CD4-positive, alpha-beta T cell (primary cell): ENCODE measurements at regions of chr11 and their contacts with region 1.

Region 1: GRCh38 chr11:66677599-66678375 is at the start of gene RBM4B:
- DNase-seq: peak; percentile 91 to 99 (median 94)
- ATAC-seq: peak; percentile 78
- H3K4me3 ChIP-seq: peak within 1 kb of the TSS; percentile 92
- H3K4me3 Mint-ChIP-seq: peak within 1 kb of the TSS; percentile 98
- H3K27ac ChIP-seq: peak within 1 kb of the TSS; percentile 98 to 99
- H3K27ac Mint-ChIP-seq: peak within 1 kb of the TSS; percentile 98
- H3K4me1 ChIP-seq: peaks cover 32% of the 10 kb centered on the region
- H3K4me1 Mint-ChIP-seq: peaks cover 49% of the 10 kb centered on the region
- H3K27me3 ChIP-seq: no peaks in the 10 kb centered on the region
- H3K27me3 Mint-ChIP-seq: no peaks in the 10 kb centered on the region
- CTCF ChIP-seq: no peak
- total RNA-seq, gene RBM4B: 3.8 to 5.1 TPM

Region 2: GRCh38 chr11:66438504-66439466 is 239.0 kb before region 1 on chr11 and contains the start of gene MRPL11:
- CTCF ChIA-PET with region 1: interaction called, 18 read pairs
- POLR2A ChIA-PET with region 1: interaction called, 30 read pairs
- intact Hi-C with region 1: no loop called
- DNase-seq: peak; percentile 78 to 95 (median 86)
- ATAC-seq: peak; percentile 99
- H3K4me3 ChIP-seq: peak within 1 kb of the TSS; percentile 70
- H3K4me3 Mint-ChIP-seq: peak within 1 kb of the TSS; percentile 94
- H3K27ac ChIP-seq: peak within 1 kb of the TSS; percentile 67 to 89
- H3K27ac Mint-ChIP-seq: peak within 1 kb of the TSS; percentile 87
- H3K4me1 ChIP-seq: peaks cover 11% of the 10 kb centered on the region
- H3K4me1 Mint-ChIP-seq: peaks cover 13% of the 10 kb centered on the region
- H3K27me3 ChIP-seq: no peaks in the 10 kb centered on the region
- H3K27me3 Mint-ChIP-seq: peaks cover 3% of the 10 kb centered on the region
- CTCF ChIP-seq: peak; percentile 69
- total RNA-seq, gene MRPL11: 17.7 to 21.0 TPM

Region 3: DNA sequence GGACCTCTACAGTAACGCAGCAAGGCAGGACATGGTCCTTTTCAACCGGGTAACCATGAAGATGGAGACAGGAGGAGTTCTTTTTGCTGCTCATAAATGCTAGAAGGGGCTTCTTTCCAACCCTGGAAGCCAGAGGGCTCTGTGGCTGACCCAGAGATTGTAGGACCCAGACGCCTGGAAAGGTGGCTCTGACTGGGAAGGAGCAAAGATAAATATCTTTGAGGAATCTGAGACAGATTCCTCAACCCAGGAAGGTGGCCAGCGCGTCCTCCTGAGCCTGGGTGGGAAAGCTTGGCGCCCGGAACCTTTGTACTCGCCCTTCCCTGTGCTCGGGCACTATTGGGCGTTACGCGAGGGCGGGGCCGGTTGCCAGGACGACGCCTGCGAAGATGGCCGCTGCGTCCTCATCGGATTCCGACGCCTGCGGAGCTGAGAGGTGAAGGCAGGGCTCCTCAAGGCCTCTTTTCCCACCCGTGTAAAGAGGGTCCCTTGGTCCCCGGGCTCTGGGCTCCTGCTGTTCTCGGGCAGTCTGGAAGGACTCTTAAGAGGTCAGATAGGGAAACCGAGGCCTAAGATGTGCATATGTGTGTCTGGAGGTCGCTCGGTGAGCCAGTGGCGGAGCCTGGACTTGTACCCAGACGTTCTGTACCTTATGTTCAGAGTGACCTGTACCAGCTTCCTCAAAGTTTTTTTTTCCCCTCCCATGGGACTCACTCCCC is 167.4 kb before region 1 on chr11 and contains the start of gene BBS1:
- CTCF ChIA-PET with region 1: interaction called, 3 read pairs
- POLR2A ChIA-PET with region 1: interaction called, 12 read pairs
- intact Hi-C with region 1: loop called in 1 of 2 experiments (anchors 1 kb)
- DNase-seq: peak; percentile 73 to 90 (median 80)
- ATAC-seq: peak; percentile 99
- H3K4me3 ChIP-seq: peak within 1 kb of the TSS; percentile 77
- H3K4me3 Mint-ChIP-seq: peak within 1 kb of the TSS; percentile 90
- H3K27ac ChIP-seq: no peak within 1 kb of the TSS
- H3K27ac Mint-ChIP-seq: peak within 1 kb of the TSS; percentile 61
- H3K4me1 ChIP-seq: peaks cover 14% of the 10 kb centered on the region
- H3K4me1 Mint-ChIP-seq: peaks cover 16% of the 10 kb centered on the region
- H3K27me3 ChIP-seq: no peaks in the 10 kb centered on the region
- H3K27me3 Mint-ChIP-seq: no peaks in the 10 kb centered on the region
- CTCF ChIP-seq: no peak
- total RNA-seq, gene BBS1: 11.7 to 11.9 TPM

Region 4: DNA sequence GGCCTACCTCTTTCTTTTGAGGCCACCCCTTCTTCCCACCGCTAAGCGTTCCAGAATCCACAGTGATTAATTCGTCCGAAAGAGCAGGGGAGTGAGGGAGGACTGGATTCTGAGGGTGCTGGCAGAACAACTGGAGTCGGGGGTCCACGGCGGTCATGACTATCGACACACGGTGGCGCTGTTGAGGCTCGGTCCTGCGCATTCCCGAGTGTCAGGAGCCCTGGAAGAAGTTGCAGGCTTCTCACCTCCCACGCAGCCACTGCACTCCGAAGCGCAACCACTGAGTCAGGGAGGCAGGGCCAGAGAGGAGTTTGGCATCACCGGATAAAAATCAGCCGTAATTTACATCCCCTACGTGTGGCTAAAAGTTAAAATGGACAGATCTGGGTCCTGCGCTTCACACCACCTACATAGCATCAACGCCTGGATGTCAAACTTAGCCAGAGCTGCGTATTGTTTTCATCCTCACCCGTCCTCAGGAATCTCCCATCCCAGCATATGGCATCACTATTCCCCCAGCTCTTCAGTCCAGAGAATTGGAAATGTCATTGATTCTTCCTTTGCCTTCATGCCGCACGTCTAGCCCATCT is 98.7 kb before region 1 on chr11:
- CTCF ChIA-PET with region 1: interaction called, 75 read pairs
- POLR2A ChIA-PET with region 1: interaction called, 25 read pairs
- intact Hi-C with region 1: loop called (anchors 1 kb)
- DNase-seq: peak; percentile 60 to 89 (median 72)
- ATAC-seq: peak; percentile 82
- H3K4me3 ChIP-seq: no peak overlapping the region
- H3K4me3 Mint-ChIP-seq: no peak overlapping the region
- H3K27ac ChIP-seq: no peak overlapping the region
- H3K27ac Mint-ChIP-seq: no peak overlapping the region
- H3K4me1 ChIP-seq: peaks cover 8% of the 10 kb centered on the region
- H3K4me1 Mint-ChIP-seq: peaks cover 8% of the 10 kb centered on the region
- H3K27me3 ChIP-seq: no peaks in the 10 kb centered on the region
- H3K27me3 Mint-ChIP-seq: peaks cover 6% of the 10 kb centered on the region
- CTCF ChIP-seq: peak; percentile 85

Region 5: GRCh38 chr11:66638177-66639065 is 39.4 kb before region 1 on chr11 and contains the start of gene RBM4:
- CTCF ChIA-PET with region 1: interaction called, 32 read pairs
- POLR2A ChIA-PET with region 1: interaction called, 110 read pairs
- intact Hi-C with region 1: loop called (anchors 1 kb)
- DNase-seq: peak; percentile 90 to 99 (median 94)
- ATAC-seq: peak; percentile 89
- H3K4me3 ChIP-seq: peak within 1 kb of the TSS; percentile 82
- H3K4me3 Mint-ChIP-seq: peak within 1 kb of the TSS; percentile 97
- H3K27ac ChIP-seq: peak within 1 kb of the TSS; percentile 94
- H3K27ac Mint-ChIP-seq: peak within 1 kb of the TSS; percentile 89
- H3K4me1 ChIP-seq: peaks cover 62% of the 10 kb centered on the region
- H3K4me1 Mint-ChIP-seq: peaks cover 73% of the 10 kb centered on the region
- H3K27me3 ChIP-seq: no peaks in the 10 kb centered on the region
- H3K27me3 Mint-ChIP-seq: no peaks in the 10 kb centered on the region
- CTCF ChIP-seq: no peak
- total RNA-seq, gene RBM4: 194 to 197 TPM

Region 6: DNA sequence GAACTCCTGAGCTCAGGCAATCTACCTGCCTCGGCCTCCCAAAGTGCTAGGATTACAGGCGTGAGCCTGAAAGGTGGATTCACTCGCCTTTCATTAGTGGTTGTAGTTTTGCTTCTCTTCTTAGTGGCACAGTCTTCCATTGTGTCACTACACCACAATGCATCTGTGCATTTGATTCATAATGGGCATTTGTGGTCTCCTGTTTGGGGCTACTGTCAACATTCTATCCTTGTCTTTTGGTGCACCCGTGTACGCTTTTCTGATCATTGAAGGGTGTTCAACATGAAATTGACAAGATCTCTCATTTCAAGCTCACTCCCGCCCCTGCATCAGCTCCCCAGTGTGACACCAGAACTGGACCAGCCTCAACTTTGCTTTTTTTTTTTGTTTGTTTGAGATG is 343.2 kb after region 1 on chr11:
- CTCF ChIA-PET with region 1: no interaction called
- POLR2A ChIA-PET with region 1: no interaction called
- intact Hi-C with region 1: no loop called
- DNase-seq: no peak
- ATAC-seq: no peak
- H3K4me3 ChIP-seq: no peak overlapping the region
- H3K4me3 Mint-ChIP-seq: peak overlapping the region; percentile 38
- H3K27ac ChIP-seq: no peak overlapping the region
- H3K27ac Mint-ChIP-seq: no peak overlapping the region
- H3K4me1 ChIP-seq: peaks cover 34% of the 10 kb centered on the region
- H3K4me1 Mint-ChIP-seq: peaks cover 32% of the 10 kb centered on the region
- H3K27me3 ChIP-seq: peaks cover 26 to 34% of the 10 kb centered on the region in 2 experiments
- H3K27me3 Mint-ChIP-seq: peaks cover 46% of the 10 kb centered on the region
- CTCF ChIP-seq: no peak

Region 7: DNA sequence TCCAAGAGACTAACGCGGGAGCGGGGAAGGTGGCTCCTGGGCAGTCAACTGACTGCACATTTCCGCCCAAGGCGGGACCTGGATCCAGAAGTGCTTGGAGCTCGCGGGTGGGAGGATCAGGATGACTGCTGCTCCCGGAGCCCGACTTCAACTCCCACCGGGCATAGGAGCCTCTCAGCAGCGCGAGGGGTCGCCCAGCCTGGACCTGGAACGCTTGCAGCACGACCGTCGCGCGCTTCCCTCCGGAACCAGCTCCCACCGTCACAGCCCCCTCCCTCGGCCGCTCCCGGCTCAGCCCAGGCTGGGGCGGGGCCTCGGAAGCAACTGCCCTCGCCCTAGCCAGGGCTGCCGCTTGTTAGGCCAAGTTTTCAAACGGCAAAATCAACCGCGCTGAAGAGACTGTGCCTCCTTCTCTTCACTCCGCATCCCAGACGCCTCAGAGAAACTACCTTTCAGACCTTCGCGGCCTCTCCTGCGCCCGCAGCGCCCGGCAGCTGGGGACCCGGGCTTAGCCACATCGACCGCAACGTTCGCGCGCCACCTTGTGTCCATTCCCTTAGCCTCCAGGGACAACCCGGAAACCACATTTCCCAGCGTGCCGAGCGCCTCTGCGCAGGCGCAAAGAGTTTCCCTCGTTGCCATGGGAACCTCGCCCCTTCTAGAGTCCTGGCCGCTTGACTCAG is 639.6 kb after region 1 on chr11:
- CTCF ChIA-PET with region 1: no interaction called
- POLR2A ChIA-PET with region 1: no interaction called
- intact Hi-C with region 1: no loop called
- DNase-seq: peak; percentile 96 to 99 (median 98)
- ATAC-seq: peak; percentile 78
- H3K4me3 ChIP-seq: peak overlapping the region; percentile 82
- H3K4me3 Mint-ChIP-seq: peak overlapping the region; percentile 99
- H3K27ac ChIP-seq: peak overlapping the region; percentile 46 to 70
- H3K27ac Mint-ChIP-seq: peak overlapping the region; percentile 85
- H3K4me1 ChIP-seq: peaks cover 42% of the 10 kb centered on the region
- H3K4me1 Mint-ChIP-seq: peaks cover 54% of the 10 kb centered on the region
- H3K27me3 ChIP-seq: no peaks in the 10 kb centered on the region
- H3K27me3 Mint-ChIP-seq: no peaks in the 10 kb centered on the region
- CTCF ChIP-seq: peak; percentile 88